K562 (cell line): ENCODE measurements at regions of chr1 and their contacts with region 1.

Region 1: DNA sequence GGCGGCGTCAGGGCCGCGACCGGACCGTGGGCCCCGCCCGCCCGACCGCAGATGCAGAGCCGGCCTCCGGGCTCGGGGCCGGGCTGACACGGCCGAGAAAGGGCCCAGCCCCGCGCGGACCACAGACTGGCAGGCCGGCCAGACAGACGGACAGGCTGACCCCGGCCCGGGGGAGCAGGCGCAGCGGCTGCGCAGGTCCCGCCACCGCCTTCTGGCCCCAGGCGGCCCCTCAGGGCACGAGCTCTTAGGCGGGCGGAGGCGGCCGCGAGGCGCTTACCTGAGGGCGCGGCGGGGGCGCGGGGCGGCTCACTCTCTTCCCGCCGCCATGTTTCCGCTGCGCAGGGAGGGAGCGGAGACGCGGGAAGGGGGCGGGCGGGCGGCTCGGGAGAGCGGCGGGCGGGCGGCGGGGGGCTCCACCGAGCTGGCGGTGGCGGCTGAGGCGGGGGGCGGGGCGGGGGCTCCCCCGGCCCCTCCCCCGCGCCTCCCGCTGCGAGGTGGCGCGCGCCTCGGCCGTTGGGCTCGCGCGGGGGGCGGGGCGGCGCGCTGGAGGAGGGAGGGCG is at the start of gene SCMH1:
- DNase-seq: peak; percentile 78 to 96 (median 92)
- ATAC-seq: peak; percentile 79
- H3K4me3 ChIP-seq: peak within 1 kb of the TSS; percentile 66
- H3K27ac ChIP-seq: peak within 1 kb of the TSS; percentile 92
- H3K4me1 ChIP-seq: peaks cover 35 to 57% of the 10 kb centered on the region in 2 experiments
- H3K27me3 ChIP-seq: no peaks in the 10 kb centered on the region
- CTCF ChIP-seq: no peak
- EP300 ChIP-seq: no peak
- POLR2A ChIP-seq: peak; percentile 66
- RAD21 ChIP-seq: no peak
- polyA plus RNA-seq, gene SCMH1: 8.5 to 14.0 TPM

Region 2: DNA sequence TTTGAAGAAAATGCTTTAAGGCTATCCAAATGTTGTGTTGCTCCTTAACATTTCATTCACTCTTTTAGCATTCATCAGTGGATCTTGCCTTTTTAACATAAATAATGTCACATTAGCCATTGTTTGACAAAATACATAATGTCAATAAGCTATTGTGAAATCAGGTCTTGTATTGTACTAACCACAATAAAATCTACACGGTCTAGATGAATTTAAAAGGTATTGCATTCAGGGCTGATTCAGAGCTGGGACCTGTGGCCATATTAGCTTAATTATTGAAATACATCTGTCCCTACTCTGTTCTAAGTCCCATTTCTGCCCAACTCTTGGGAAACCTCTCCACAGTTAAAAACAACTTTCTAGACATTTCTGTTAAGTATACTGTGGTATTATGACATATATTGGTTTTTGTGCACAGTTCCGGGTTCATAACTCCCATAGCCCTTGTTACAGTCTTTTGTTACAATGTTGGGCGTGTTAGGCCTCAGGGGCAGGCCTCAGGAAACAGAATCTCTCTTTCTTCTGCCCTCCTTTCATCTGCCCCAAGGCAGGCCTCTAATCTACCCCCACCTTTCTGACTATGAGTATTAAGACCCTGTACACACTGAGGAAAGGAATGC is 335.0 kb before region 1 on chr1:
- CTCF ChIA-PET with region 1: no interaction called
- POLR2A ChIA-PET with region 1: no interaction called
- in situ Hi-C with region 1: no loop called
- intact Hi-C with region 1: no loop called
- DNase-seq: no peak
- ATAC-seq: no peak
- H3K4me3 ChIP-seq: no peak overlapping the region
- H3K27ac ChIP-seq: no peak overlapping the region
- H3K4me1 ChIP-seq: peaks cover 0 to 3% of the 10 kb centered on the region in 2 experiments; a peak in 1 of 5 replicates
- H3K27me3 ChIP-seq: no peaks in the 10 kb centered on the region
- CTCF ChIP-seq: no peak
- EP300 ChIP-seq: no peak
- POLR2A ChIP-seq: no peak
- RAD21 ChIP-seq: no peak

Region 3: GRCh38 chr1:41045740-41046139 is 196.1 kb before region 1 on chr1:
- CTCF ChIA-PET with region 1: no interaction called
- POLR2A ChIA-PET with region 1: no interaction called
- in situ Hi-C with region 1: no loop called
- intact Hi-C with region 1: loop called (anchors 10 kb)
- DNase-seq: no peak
- ATAC-seq: no peak
- H3K4me3 ChIP-seq: no peak overlapping the region
- H3K27ac ChIP-seq: no peak overlapping the region
- H3K4me1 ChIP-seq: peaks cover 0 to 16% of the 10 kb centered on the region in 2 experiments; a peak in 4 of 5 replicates
- H3K27me3 ChIP-seq: no peaks in the 10 kb centered on the region
- CTCF ChIP-seq: no peak
- EP300 ChIP-seq: no peak
- POLR2A ChIP-seq: no peak
- RAD21 ChIP-seq: no peak

Region 4: GRCh38 chr1:41161846-41162245 is 80.0 kb before region 1 on chr1:
- CTCF ChIA-PET with region 1: no interaction called
- POLR2A ChIA-PET with region 1: interaction called, 3 read pairs
- in situ Hi-C with region 1: no loop called
- intact Hi-C with region 1: loop called (anchors 2 kb)
- DNase-seq: no peak
- ATAC-seq: no peak
- H3K4me3 ChIP-seq: no peak overlapping the region
- H3K27ac ChIP-seq: no peak overlapping the region
- H3K4me1 ChIP-seq: peaks cover 15 to 33% of the 10 kb centered on the region in 2 experiments; a peak in 4 of 5 replicates
- H3K27me3 ChIP-seq: no peaks in the 10 kb centered on the region
- CTCF ChIP-seq: no peak
- EP300 ChIP-seq: no peak
- POLR2A ChIP-seq: no peak
- RAD21 ChIP-seq: no peak

Region 5: GRCh38 chr1:41184451-41184850 is 57.4 kb before region 1 on chr1:
- CTCF ChIA-PET with region 1: no interaction called
- POLR2A ChIA-PET with region 1: no interaction called
- in situ Hi-C with region 1: no loop called
- intact Hi-C with region 1: no loop called
- DNase-seq: no peak
- ATAC-seq: no peak
- H3K4me3 ChIP-seq: no peak overlapping the region
- H3K27ac ChIP-seq: no peak overlapping the region
- H3K4me1 ChIP-seq: no peaks in the 10 kb centered on the region
- H3K27me3 ChIP-seq: no peaks in the 10 kb centered on the region
- CTCF ChIP-seq: no peak
- EP300 ChIP-seq: no peak
- POLR2A ChIP-seq: no peak
- RAD21 ChIP-seq: no peak

Region 6: GRCh38 chr1:41313661-41314131 is 71.8 kb after region 1 on chr1:
- CTCF ChIA-PET with region 1: no interaction called
- POLR2A ChIA-PET with region 1: no interaction called
- in situ Hi-C with region 1: no loop called
- intact Hi-C with region 1: no loop called
- DNase-seq: peak; percentile 59 to 73 (median 68)
- ATAC-seq: peak; percentile 93
- H3K4me3 ChIP-seq: no peak overlapping the region
- H3K27ac ChIP-seq: no peak overlapping the region
- H3K4me1 ChIP-seq: no peaks in the 10 kb centered on the region
- H3K27me3 ChIP-seq: peaks cover 12 to 38% of the 10 kb centered on the region in 2 experiments; a peak in 4 of 5 replicates
- CTCF ChIP-seq: peak; percentile 66 to 88 (median 84)
- EP300 ChIP-seq: no peak
- POLR2A ChIP-seq: no peak
- RAD21 ChIP-seq: peak; percentile 19 to 64; a peak in 2 of 4 replicates